Breast epithelium (tissue), 4 donors: ENCODE measurements at regions of chr10 and their contacts with region 1.

Region 1: DNA sequence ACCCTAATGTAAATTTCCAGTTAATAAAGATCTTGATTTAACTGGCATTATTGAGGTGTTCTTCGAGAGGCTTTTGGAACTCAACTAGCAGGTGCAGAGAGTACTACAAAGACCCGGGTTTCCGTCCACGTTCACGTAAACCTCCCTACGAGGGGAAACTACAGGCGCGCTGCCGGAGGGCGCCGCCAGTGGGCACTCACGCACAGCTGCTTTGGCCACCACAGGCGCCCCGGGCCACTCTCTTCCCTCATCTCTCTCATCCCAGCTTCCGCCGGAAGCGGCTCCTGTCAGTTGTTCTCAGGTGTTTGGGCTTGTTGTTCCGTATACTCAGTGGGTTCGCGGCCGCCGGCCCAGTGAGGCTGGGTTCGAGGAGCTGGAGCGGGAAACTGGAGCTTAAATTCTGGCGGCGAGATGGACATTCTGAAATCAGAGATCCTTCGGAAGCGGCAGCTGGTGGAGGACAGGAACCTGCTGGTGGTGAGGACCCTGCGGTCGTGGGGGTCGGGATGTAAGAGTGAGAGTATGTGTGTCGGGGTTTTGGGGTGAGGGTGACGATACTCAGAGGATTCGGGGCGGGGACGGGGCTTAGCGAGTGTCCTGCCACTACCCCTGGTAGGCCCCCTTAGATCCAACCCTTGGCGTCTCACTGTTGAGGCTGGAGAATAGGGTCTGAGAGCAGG is at the start of gene PRPF18:
- DNase-seq: peak; percentile 90 to 93
- H3K4me3 ChIP-seq: peak within 1 kb of the TSS; percentile 86 to 92 (median 89)
- H3K27ac ChIP-seq: peak within 1 kb of the TSS; percentile 65 to 70
- H3K4me1 ChIP-seq: peaks cover 0 to 7% of the 10 kb centered on the region in 2 donors
- H3K27me3 ChIP-seq: no peaks in the 10 kb centered on the region
- CTCF ChIP-seq: peak; percentile 77 to 94 (median 88)
- POLR2A ChIP-seq: no peak
- total RNA-seq, gene PRPF18: 29.6 to 48.6 (median 36.7) TPM

Region 2: DNA sequence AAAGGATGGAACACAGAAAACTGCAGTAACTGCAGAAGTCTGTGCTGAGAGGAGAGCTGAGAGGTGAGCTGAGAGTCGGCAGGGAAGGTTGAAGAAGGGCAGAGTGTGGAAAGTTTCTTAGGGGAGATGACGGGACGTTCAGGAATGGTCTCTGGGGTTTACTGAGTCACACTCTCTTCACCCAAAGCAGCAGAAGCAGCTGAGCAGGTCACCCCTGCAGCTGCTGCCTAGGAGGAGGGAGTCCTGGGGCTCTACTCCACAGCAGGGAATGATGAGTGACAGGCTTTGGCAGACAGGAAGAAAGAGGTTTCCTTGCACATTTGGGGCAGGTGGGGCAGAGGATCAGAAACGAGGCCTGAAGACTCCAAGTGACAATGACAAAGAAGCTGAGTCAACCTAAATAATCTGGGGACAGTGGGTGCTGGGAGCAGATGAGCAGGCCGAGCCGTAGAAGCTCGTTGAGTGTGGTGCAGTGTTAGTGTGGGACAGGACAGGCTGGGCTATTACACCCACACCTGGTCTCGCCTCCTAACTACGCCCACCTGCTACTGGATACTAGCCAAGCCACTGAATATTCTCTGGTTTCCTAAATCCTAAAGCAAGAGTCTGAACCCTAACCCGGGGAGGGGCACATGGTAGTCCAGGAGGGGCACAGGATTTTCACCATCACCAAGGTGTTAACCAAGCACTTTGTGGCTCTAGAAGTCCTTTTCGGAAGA is 82.9 kb before region 1 on chr10:
- intact Hi-C with region 1: no loop called
- DNase-seq: no peak
- H3K4me3 ChIP-seq: no peak overlapping the region
- H3K27ac ChIP-seq: no peak overlapping the region
- H3K4me1 ChIP-seq: no peaks in the 10 kb centered on the region
- H3K27me3 ChIP-seq: no peaks in the 10 kb centered on the region
- CTCF ChIP-seq: no peak
- POLR2A ChIP-seq: no peak

Region 3: DNA sequence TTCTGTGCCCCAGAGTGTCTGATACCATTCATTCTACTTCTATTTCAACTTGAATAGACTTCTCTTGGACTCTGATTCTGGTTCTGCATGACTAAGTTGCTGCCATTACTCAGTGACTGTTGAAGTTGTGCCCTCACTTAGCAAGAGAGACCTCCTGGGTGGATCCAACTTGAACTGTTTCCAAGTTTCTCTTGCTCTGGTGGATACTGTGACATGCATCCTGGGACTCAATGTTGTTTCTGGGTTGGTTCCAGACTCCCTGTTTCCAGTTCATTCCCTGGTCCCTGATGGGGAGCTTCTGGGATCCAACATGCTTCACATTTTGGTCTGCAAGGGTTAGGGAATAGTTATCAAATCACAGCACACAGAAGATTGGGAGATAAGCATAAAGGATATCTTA is 26.2 kb before region 1 on chr10:
- intact Hi-C with region 1: loop called (anchors 2 kb)
- DNase-seq: no peak
- H3K4me3 ChIP-seq: no peak overlapping the region
- H3K27ac ChIP-seq: no peak overlapping the region
- H3K4me1 ChIP-seq: no peaks in the 10 kb centered on the region
- H3K27me3 ChIP-seq: no peaks in the 10 kb centered on the region
- CTCF ChIP-seq: no peak
- POLR2A ChIP-seq: no peak

Region 4: GRCh38 chr10:13971601-13972475 is 385.0 kb after region 1 on chr10:
- intact Hi-C with region 1: no loop called
- DNase-seq: no peak
- H3K4me3 ChIP-seq: peak overlapping the region in 1 of 3 donors; percentile 15
- H3K27ac ChIP-seq: peak overlapping the region in 1 of 2 donors; percentile 7
- H3K4me1 ChIP-seq: no peaks in the 10 kb centered on the region
- H3K27me3 ChIP-seq: no peaks in the 10 kb centered on the region
- CTCF ChIP-seq: no peak
- POLR2A ChIP-seq: no peak

Region 5: GRCh38 chr10:14659626-14660196 is 1072.9 kb after region 1 on chr10:
- intact Hi-C with region 1: loop called (anchors 5 kb)
- DNase-seq: no peak
- H3K4me3 ChIP-seq: no peak overlapping the region
- H3K27ac ChIP-seq: no peak overlapping the region
- H3K4me1 ChIP-seq: peaks cover 0 to 4% of the 10 kb centered on the region in 2 donors
- H3K27me3 ChIP-seq: no peaks in the 10 kb centered on the region
- CTCF ChIP-seq: no peak
- POLR2A ChIP-seq: no peak